WTC11 (cell line): ENCODE measurements at regions of chr5 and their contacts with region 1.

Region 1: DNA sequence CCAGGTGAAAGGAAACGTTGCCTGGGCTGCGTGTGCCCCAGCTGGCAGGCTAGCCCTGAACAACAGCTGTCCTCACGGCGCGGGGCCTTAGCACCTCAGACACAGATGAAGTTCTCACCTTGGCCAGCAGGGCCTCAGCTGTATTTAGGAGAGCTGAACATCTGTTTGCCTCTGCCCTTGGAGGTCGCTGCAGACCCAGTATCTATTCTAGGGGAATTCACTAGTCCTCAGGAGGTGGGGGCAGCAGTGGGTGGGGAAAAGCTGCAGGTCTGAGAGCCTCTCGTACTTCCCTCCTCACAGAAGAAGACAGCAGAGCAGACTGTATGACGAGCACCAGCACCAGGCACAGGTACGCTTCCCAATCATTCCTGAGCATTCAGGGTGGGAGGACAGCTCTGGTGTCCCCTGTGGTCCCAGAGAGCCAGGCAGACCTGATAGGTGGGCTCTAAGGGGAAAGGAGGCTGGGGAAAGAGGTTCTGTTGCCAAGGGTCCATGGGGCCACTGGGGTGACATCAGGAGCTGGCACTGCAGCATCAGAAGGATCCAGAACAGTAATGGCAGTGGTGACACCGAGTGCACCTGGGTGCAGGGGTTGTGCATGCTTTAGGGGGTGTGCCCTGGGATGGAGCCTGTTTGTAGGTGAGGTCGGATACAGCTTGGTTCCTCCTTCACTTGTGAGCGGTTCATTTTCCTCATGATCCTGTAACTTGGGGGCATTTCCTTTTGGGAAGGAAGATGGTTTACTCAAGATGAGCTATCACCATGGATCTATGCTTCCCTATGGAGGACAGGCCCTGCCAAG is 13.8 kb downstream of the CD74 start:
- DNase-seq: peak; percentile 28
- ATAC-seq: peak; percentile 74
- H3K4me3 Mint-ChIP-seq: no peak overlapping the region
- H3K27ac Mint-ChIP-seq: no peak overlapping the region
- H3K4me1 Mint-ChIP-seq: no peaks in the 10 kb centered on the region
- H3K27me3 Mint-ChIP-seq: no peaks in the 10 kb centered on the region
- CTCF ChIP-seq: peak; percentile 23; the same call in 1 of the 2 replicates

Region 2: GRCh38 chr5:149254506-149254905 is 1144.4 kb before region 1 on chr5:
- CTCF ChIA-PET with region 1: no interaction called
- POLR2A ChIA-PET with region 1: no interaction called
- DNase-seq: peak; percentile 32
- ATAC-seq: peak; percentile 74
- H3K4me3 Mint-ChIP-seq: no peak overlapping the region
- H3K27ac Mint-ChIP-seq: no peak overlapping the region
- H3K4me1 Mint-ChIP-seq: no peaks in the 10 kb centered on the region
- H3K27me3 Mint-ChIP-seq: no peaks in the 10 kb centered on the region; the same call in 1 of the 2 replicates
- CTCF ChIP-seq: no peak

Region 3: DNA sequence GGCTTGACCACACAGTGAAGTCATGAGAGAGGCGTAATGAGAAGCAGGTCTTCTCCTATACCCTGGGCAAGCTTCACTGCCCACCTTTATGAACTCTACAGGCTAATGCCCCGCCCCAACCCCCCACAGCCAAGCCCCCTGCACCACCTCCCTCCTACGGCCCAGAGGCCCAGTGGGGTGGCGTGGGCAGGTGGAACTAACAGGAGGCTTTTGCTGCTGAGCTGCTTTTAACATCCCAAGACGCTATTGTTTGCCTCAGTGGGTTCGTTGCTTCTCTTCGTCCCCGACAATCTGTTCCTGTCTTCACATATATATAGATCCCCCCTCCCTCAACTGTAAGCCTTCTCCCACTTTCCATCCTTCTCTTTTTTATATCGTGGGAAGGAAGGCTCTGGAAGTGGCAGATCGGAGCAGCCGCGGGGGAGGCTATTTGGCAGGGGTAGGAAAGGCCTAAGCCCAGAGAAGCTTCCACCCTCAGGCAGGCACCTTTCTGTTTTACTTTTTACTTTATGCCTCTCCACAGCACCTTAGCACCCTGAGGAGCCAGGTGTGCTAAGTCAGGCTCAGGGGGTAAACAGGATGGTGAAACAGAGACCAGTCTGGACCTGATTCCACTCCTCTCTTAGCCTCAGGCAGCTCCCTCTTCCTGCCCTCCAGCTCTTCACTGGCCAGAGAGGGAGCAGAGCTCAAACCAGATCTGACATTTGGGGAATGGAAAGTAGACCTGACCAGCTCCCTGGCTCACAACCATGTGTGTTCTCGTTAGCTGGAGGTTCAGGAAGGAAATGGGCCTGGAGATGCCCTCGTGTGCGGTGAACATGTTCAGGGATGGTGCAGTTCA is 12.7 kb before region 1 on chr5:
- CTCF ChIA-PET with region 1: interaction called, 13 read pairs
- POLR2A ChIA-PET with region 1: no interaction called
- DNase-seq: no peak
- ATAC-seq: no peak
- H3K4me3 Mint-ChIP-seq: no peak overlapping the region
- H3K27ac Mint-ChIP-seq: no peak overlapping the region
- H3K4me1 Mint-ChIP-seq: no peaks in the 10 kb centered on the region
- H3K27me3 Mint-ChIP-seq: no peaks in the 10 kb centered on the region
- CTCF ChIP-seq: no peak

Region 4: DNA sequence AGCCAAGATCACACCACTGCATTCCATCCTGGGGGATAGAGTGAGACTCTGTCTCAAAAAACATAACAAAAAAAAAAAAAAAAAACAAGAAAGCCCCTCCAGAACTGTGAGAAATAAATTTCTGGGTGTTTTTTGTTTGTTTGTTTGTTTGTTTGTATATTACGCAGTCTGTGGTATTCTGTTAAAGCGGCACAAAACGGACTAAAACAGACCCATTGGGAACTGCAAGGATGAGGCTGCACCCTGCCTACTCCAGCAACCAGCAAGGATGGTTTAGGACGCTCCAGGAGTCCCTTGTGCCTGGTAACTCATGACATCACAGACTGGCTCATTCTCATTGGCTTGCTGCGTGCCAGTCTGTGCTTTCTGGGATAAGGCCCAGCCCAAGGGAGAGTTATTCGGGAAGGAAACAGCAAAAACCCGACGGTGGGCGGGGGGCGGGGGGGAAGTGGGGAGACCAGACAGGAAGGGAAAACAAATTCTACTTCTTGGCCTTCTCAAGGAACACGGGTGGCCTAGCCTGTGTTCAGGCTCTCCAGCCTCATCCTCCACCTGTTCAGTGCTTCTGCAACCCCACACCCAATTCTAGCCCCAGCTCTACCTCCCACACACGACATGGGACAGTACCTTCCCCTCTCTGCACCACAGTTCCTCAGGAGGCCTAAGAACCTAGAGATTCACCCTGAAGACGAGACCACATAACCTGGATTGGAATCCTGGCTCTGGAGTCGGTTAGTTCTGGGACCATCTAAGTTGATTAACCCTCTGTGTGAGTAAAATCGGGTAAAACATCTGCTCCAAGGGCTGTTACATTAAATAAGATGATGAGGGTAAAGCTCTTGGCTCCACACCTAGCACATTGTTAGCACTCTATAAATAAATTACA is 11.0 kb after region 1 on chr5:
- CTCF ChIA-PET with region 1: interaction called, 41 read pairs
- POLR2A ChIA-PET with region 1: no interaction called
- DNase-seq: peak; percentile 76
- ATAC-seq: peak; percentile 86
- H3K4me3 Mint-ChIP-seq: peak overlapping the region; percentile 60
- H3K27ac Mint-ChIP-seq: peak overlapping the region; percentile 92
- H3K4me1 Mint-ChIP-seq: peaks cover 39% of the 10 kb centered on the region
- H3K27me3 Mint-ChIP-seq: no peaks in the 10 kb centered on the region
- CTCF ChIP-seq: no peak

Region 5: DNA sequence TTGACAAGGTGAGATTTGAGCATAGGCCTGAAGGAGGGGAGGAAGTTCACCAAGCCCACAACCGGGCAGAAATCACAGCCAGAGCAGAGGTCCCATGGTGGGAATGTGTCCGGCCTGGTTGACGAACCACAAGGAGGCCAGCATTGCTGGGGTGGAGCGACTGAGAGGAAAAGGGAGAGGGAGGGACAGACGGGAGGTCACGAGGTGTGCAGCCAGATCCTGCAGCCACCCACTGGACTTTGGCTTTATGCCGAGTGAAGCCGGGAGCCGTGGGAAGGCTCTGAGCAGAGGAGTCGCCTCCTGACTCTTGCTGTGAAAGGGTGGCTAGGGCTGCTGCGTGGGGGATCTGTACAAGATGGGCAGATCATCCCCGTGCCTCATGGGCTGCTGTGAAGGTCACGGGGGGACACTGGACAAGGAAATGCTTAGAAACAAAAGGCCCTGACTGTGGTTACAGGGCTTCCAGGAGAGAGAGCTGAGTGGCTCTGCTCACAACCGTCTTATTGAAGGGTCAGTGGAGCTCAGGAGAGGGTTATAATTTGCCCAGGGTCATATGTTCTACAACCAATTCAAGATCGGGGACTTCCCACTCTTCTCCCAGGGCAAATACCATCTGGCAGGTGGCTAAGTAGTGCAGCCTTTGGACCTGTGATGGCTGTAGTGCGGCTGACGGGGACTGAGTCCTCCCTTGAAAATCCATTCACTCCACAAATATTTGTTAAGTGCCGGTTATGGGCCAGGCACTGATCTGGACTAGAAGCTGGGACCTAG is 29.4 kb after region 1 on chr5:
- CTCF ChIA-PET with region 1: interaction called, 15 read pairs
- POLR2A ChIA-PET with region 1: no interaction called
- DNase-seq: no peak
- ATAC-seq: peak; percentile 33; the same call in 1 of the 2 replicates
- H3K4me3 Mint-ChIP-seq: no peak overlapping the region
- H3K27ac Mint-ChIP-seq: no peak overlapping the region
- H3K4me1 Mint-ChIP-seq: no peaks in the 10 kb centered on the region
- H3K27me3 Mint-ChIP-seq: peaks cover 4% of the 10 kb centered on the region; the same call in 1 of the 2 replicates
- CTCF ChIP-seq: no peak

Region 6: DNA sequence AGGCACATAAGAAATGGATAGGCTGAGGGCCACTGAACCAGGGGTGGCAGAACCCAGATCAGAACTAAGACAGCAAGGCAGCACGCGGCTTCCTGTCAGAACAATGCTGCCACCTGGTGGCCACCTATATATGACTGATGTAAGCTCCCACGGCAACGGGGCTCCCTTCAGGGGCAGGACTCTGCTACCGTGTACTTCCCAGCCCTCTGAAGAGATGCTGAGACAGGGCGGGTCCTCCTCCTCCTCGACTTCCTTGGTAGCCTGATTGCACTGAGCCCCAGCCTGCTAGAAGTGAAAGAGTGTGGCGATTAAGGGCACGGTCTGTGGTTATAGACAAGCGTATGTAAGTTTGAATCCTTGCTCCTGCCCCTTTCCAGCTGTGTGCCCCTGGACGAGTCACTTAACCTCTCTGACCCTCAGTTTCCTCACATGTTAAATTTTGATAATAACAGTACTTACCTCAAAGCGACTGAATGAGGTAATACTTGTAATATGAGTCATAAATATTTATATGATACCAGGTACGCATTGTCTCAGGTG is 37.3 kb after region 1 on chr5:
- CTCF ChIA-PET with region 1: interaction called, 76 read pairs
- POLR2A ChIA-PET with region 1: no interaction called
- DNase-seq: peak; percentile 96
- ATAC-seq: peak; percentile 89
- H3K4me3 Mint-ChIP-seq: no peak overlapping the region
- H3K27ac Mint-ChIP-seq: no peak overlapping the region
- H3K4me1 Mint-ChIP-seq: peaks cover 10% of the 10 kb centered on the region
- H3K27me3 Mint-ChIP-seq: no peaks in the 10 kb centered on the region
- CTCF ChIP-seq: peak; percentile 72

Region 7: DNA sequence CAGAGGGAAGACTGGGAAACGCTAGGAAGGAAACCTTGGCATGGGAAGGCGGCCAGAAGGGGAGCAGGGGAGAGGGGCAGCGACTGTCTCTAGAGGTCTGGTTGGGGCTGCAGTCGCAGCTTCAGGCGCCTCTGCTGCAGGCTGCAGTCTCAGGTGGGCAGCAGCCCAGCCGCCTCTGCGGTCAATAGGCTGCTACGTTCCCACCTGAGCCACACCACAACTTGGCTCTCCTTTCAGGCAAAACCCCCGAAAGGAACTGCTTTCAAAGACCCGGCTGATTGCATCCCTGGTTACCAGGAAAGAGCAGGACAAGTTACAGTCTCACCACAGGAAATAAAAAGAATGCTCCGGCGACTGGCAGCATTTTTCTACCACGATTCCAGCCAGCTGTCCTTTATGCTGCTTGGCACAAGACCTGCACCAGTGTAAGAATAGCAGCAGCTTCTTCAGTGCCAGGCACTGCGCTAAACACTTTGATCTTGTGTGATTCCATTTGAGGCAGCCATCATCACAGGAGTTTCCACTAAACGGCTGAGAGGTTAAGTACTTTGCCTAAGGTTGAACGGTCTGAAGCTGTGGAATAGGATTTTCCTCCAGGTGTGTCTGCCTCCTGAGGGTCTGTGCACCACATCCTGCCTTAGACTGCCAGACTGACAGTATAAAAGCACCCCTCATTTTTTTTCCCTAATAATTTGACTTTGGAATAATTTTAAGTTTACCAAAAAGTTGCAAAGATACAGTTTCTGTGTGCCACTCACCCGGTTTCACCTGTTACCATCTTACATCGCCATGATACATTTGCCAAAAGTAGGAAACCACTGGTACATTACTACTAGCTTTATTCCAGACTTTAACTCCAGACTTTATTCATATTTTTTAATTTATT is 43.1 kb after region 1 on chr5:
- CTCF ChIA-PET with region 1: interaction called, 76 read pairs
- POLR2A ChIA-PET with region 1: interaction called, 3 read pairs
- DNase-seq: no peak
- ATAC-seq: peak; percentile 55
- H3K4me3 Mint-ChIP-seq: no peak overlapping the region
- H3K27ac Mint-ChIP-seq: peak overlapping the region; percentile 82
- H3K4me1 Mint-ChIP-seq: peaks cover 34% of the 10 kb centered on the region
- H3K27me3 Mint-ChIP-seq: no peaks in the 10 kb centered on the region
- CTCF ChIP-seq: no peak